Posterior vena cava (tissue), 2 donors: ENCODE measurements at regions of chr2 and their contacts with region 1.

Region 1: GRCh38 chr2:104638190-104638858 is 215.6 kb upstream of the POU3F3 start:
- DNase-seq: no peak

Region 2: DNA sequence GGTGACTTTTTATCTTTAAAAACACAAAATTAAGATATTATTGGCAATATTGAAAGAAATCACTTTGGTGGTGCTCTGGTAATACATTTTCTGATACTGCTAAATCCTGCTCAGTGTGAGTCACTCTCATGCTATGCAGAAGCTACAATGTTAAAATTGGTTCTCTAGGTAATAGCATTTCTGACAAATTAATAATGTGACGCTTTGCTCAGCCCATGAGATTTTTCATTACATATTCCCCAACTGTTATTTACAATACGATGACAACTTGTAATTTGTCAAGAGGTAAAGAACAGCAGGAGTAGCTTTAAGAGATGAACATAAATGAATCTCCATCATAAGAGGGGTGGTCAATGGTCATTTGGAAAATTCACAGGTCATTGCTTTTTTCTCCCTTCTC is 1302.9 kb before region 1 on chr2:
- intact Hi-C with region 1: loop called in 1 of 2 experiments (anchors 5 kb)
- DNase-seq: no peak

Region 3: DNA sequence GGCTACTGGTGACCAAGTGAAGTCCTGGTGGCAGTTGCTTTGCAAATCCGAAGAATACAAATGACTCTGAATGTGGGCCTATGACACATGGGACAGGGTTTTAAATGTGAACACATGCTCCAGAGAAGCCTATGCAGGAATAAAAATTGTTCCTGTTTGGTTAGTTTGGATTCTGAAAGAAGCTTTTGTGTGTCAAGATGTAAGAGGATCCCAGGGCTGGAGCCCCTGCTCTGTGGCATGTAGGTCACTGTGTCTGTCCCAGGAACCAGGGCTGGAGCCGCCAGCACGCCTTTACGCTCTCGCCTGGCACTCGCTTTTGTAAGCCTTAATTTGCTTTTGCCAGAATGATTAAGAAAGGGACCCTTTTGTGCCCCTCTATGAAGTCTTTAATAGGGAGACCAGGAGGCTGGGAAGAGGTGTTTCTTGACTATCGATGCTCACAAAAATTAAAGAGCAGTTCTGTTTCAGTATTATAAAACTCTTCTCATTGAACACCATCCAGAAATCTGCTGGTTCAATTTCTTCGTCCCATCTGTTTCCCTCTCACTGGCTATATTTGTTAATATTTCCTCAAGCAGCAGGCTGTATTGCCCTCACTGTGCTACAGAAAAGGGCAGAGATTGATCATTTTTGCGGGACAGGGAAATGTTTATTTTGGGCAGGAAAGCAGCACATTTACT is 317.1 kb before region 1 on chr2:
- intact Hi-C with region 1: no loop called
- DNase-seq: no peak